CD4-positive, alpha-beta memory T cell (primary cell): ENCODE measurements at regions of chr20 and their contacts with region 1.

Region 1: GRCh38 chr20:64119681-64120341 is 12.4 kb upstream of the NPBWR2 start:
- DNase-seq: no peak
- H3K4me3 ChIP-seq: peak overlapping the region; percentile 12 to 47
- H3K4me3 Mint-ChIP-seq: peak overlapping the region; percentile 32 to 82 (median 77)
- H3K27ac ChIP-seq: no peak overlapping the region
- H3K27ac Mint-ChIP-seq: peak overlapping the region in 5 of 7 donors; percentile 48 to 91 (median 79)
- H3K4me1 ChIP-seq: peaks cover 11% of the 10 kb centered on the region
- H3K4me1 Mint-ChIP-seq: peaks cover 3 to 10% (median 7%) of the 10 kb centered on the region in 4 donors
- H3K27me3 ChIP-seq: peaks cover 10% of the 10 kb centered on the region
- H3K27me3 Mint-ChIP-seq: peaks cover 5 to 10% of the 10 kb centered on the region in 2 donors

Region 2: DNA sequence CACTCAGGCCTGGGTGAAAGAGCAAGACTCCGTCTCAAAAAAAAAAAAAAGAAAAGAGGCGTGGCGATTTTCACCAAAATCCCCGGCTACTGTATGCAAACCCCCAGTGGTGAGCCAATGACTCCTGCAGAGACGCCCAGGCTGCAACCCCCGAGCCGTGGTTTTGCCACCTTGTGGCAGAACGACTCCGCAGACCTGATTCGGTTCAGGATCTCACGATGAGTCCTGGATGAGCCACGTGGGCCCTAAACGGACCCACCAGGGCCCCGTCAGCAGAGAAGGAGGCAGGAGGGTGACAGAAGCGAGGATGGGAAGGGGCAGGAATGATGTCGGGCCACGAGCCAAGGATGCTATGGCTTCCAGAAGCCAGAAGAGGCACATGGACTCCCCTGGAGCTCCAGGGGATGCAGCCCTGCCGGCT is 337.8 kb before region 1 on chr20:
- CTCF ChIA-PET with region 1: interaction called, 7 read pairs
- POLR2A ChIA-PET with region 1: no interaction called
- intact Hi-C with region 1: loop called (anchors 2 kb)
- DNase-seq: peak; percentile 65 to 83 (median 73)
- H3K4me3 ChIP-seq: no peak overlapping the region
- H3K4me3 Mint-ChIP-seq: peak overlapping the region in 6 of 8 donors; percentile 55 to 80 (median 70)
- H3K27ac ChIP-seq: no peak overlapping the region
- H3K27ac Mint-ChIP-seq: peak overlapping the region; percentile 17 to 90 (median 82)
- H3K4me1 ChIP-seq: peaks cover 14% of the 10 kb centered on the region
- H3K4me1 Mint-ChIP-seq: peaks cover 16 to 27% (median 17%) of the 10 kb centered on the region in 4 donors
- H3K27me3 ChIP-seq: no peaks in the 10 kb centered on the region
- H3K27me3 Mint-ChIP-seq: no peaks in the 10 kb centered on the region

Region 3: GRCh38 chr20:63911176-63911575 is 208.6 kb before region 1 on chr20:
- CTCF ChIA-PET with region 1: no interaction called
- POLR2A ChIA-PET with region 1: no interaction called
- intact Hi-C with region 1: loop called (anchors 1 kb)
- DNase-seq: no peak
- H3K4me3 ChIP-seq: no peak overlapping the region
- H3K4me3 Mint-ChIP-seq: peak overlapping the region in 2 of 8 donors; percentile 32 to 37
- H3K27ac ChIP-seq: no peak overlapping the region
- H3K27ac Mint-ChIP-seq: peak overlapping the region in 6 of 7 donors; percentile 29 to 85 (median 74)
- H3K4me1 ChIP-seq: peaks cover 28% of the 10 kb centered on the region
- H3K4me1 Mint-ChIP-seq: peaks cover 24 to 54% (median 41%) of the 10 kb centered on the region in 4 donors
- H3K27me3 ChIP-seq: no peaks in the 10 kb centered on the region
- H3K27me3 Mint-ChIP-seq: no peaks in the 10 kb centered on the region

Region 4: GRCh38 chr20:63980806-63981728 is 138.7 kb before region 1 on chr20 and contains the start of gene PRPF6:
- CTCF ChIA-PET with region 1: interaction called, 21 read pairs
- POLR2A ChIA-PET with region 1: interaction called, 6 read pairs
- intact Hi-C with region 1: no loop called
- DNase-seq: peak; percentile 91 to 94 (median 94)
- H3K4me3 ChIP-seq: peak within 1 kb of the TSS; percentile 42 to 67
- H3K4me3 Mint-ChIP-seq: peak within 1 kb of the TSS; percentile 90 to 99 (median 93)
- H3K27ac ChIP-seq: peak within 1 kb of the TSS; percentile 69
- H3K27ac Mint-ChIP-seq: peak within 1 kb of the TSS; percentile 95 to 99 (median 98)
- H3K4me1 ChIP-seq: peaks cover 54% of the 10 kb centered on the region
- H3K4me1 Mint-ChIP-seq: peaks cover 48 to 72% (median 60%) of the 10 kb centered on the region in 4 donors
- H3K27me3 ChIP-seq: no peaks in the 10 kb centered on the region
- H3K27me3 Mint-ChIP-seq: no peaks in the 10 kb centered on the region
- total RNA-seq, gene PRPF6: 86.4 to 88.7 TPM

Region 5: GRCh38 chr20:64079273-64080012 is 40.4 kb before region 1 on chr20 and contains the start of gene RGS19:
- CTCF ChIA-PET with region 1: interaction called, 73 read pairs
- POLR2A ChIA-PET with region 1: interaction called, 13 read pairs
- intact Hi-C with region 1: loop called (anchors 1 kb)
- DNase-seq: peak; percentile 64 to 80 (median 67)
- H3K4me3 ChIP-seq: peak within 1 kb of the TSS; percentile 73 to 97
- H3K4me3 Mint-ChIP-seq: peak within 1 kb of the TSS; percentile 86 to 95 (median 90)
- H3K27ac ChIP-seq: peak within 1 kb of the TSS; percentile 74
- H3K27ac Mint-ChIP-seq: peak within 1 kb of the TSS; percentile 83 to 93 (median 92)
- H3K4me1 ChIP-seq: peaks cover 47% of the 10 kb centered on the region
- H3K4me1 Mint-ChIP-seq: peaks cover 10 to 61% (median 34%) of the 10 kb centered on the region in 4 donors
- H3K27me3 ChIP-seq: no peaks in the 10 kb centered on the region
- H3K27me3 Mint-ChIP-seq: no peaks in the 10 kb centered on the region
- total RNA-seq, gene RGS19: 35.0 to 35.6 TPM

Region 6: DNA sequence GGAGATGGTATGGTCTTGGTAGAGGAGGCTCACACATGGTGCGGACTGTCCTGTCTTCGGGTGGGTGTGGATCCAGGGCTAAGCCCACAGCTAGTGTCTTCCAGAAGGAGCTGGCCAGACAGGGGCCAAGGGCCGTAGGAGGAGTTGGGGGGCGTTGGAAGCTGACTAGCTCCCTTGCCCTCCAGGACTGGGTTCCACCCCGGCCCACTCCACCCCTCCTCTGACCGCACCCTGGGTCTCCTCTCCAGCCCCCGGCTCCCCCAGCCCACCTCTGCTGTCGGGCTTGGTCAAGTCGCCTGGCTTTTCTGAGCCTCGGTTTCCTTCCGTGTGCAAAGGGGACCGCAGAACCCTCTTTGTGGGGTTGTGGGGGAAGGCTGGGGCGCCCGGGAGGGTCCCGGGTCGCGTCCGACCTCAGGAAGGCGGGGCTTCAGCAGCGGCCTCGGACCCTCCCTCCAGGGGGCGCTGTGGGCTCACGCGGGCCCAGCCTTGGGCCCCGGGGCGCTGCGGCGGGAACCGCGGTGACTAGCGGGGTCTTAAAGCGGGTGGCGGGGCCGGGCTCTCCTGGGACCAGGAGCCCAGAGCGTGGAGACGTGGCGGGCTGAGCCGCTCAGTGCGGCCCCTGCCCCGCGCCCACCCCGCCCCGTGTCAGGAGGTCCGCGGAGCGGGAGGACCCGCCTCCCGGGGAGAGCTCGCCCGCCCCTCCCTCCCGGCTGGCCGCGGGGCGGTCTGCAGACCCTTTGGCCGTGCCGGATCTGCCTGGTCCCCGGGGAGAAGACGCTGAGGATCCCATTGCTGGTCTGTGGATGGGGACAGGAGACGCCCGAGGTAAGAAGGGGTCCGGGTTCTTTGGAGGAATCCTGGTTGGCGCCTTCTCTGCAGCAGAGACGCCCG is 17.8 kb before region 1 on chr20:
- CTCF ChIA-PET with region 1: interaction called, 6 read pairs
- POLR2A ChIA-PET with region 1: no interaction called
- intact Hi-C with region 1: loop called (anchors 2 kb)
- DNase-seq: peak in 4 of 5 donors; percentile 50 to 64 (median 55)
- H3K4me3 ChIP-seq: no peak overlapping the region
- H3K4me3 Mint-ChIP-seq: peak overlapping the region in 4 of 8 donors; percentile 44 to 60 (median 49)
- H3K27ac ChIP-seq: no peak overlapping the region
- H3K27ac Mint-ChIP-seq: peak overlapping the region in 2 of 7 donors; percentile 47 to 51
- H3K4me1 ChIP-seq: peaks cover 20% of the 10 kb centered on the region
- H3K4me1 Mint-ChIP-seq: peaks cover 0 to 10% (median 7%) of the 10 kb centered on the region in 4 donors
- H3K27me3 ChIP-seq: peaks cover 11% of the 10 kb centered on the region
- H3K27me3 Mint-ChIP-seq: peaks cover 12 to 15% of the 10 kb centered on the region in 2 donors

Region 7: GRCh38 chr20:64269604-64270411 is 150.0 kb after region 1 on chr20:
- CTCF ChIA-PET with region 1: no interaction called
- POLR2A ChIA-PET with region 1: no interaction called
- intact Hi-C with region 1: no loop called
- DNase-seq: no peak
- H3K4me3 ChIP-seq: no peak overlapping the region
- H3K4me3 Mint-ChIP-seq: no peak overlapping the region
- H3K27ac ChIP-seq: no peak overlapping the region
- H3K27ac Mint-ChIP-seq: peak overlapping the region in 1 of 7 donors; percentile 26
- H3K4me1 ChIP-seq: no peaks in the 10 kb centered on the region
- H3K4me1 Mint-ChIP-seq: peaks cover 23 to 30% (median 24%) of the 10 kb centered on the region in 4 donors
- H3K27me3 ChIP-seq: no peaks in the 10 kb centered on the region
- H3K27me3 Mint-ChIP-seq: no peaks in the 10 kb centered on the region